CD4-positive, alpha-beta T cell (primary cell): ENCODE measurements at regions of chr4 and their contacts with region 1.

Region 1: DNA sequence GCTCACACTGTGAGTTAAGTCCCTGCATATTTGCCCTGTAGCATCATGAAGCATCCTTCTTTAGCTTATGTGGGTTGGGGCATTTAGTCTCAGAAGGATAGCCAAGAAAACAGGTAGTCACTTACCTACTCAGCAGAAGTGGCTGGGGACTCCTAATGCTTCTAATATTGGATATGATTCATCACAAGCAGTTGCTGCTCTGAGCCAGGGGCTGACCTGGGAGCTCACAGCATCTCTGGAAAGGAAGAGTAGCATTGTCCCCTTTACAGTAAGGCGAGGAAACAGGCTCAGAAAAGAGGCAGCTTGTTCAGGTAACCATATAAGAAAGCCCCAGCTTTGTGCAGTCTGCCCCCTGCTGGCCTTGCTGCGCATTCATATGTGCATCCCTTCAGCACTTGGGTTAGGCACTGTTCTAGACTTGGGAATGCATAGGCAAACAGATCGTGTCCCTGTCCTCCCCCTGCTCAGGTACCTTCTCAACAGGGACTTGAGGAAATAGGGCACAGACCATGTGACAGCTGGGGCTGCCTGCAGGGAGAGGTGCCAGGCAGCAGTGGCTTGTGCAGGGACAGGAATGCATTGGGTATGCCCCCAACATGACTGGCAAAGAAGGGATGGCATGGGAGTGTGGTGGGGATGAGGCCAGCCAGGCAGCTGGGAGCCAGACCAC is 35.7 kb upstream of the TBC1D14 start:
- DNase-seq: peak; percentile 74 to 89 (median 78)
- ATAC-seq: peak; percentile 97
- H3K4me3 ChIP-seq: no peak overlapping the region
- H3K4me3 Mint-ChIP-seq: no peak overlapping the region
- H3K27ac ChIP-seq: no peak overlapping the region
- H3K27ac Mint-ChIP-seq: no peak overlapping the region
- H3K4me1 ChIP-seq: peaks cover 6% of the 10 kb centered on the region
- H3K4me1 Mint-ChIP-seq: no peaks in the 10 kb centered on the region
- H3K27me3 ChIP-seq: no peaks in the 10 kb centered on the region
- H3K27me3 Mint-ChIP-seq: no peaks in the 10 kb centered on the region
- CTCF ChIP-seq: peak; percentile 80

Region 2: DNA sequence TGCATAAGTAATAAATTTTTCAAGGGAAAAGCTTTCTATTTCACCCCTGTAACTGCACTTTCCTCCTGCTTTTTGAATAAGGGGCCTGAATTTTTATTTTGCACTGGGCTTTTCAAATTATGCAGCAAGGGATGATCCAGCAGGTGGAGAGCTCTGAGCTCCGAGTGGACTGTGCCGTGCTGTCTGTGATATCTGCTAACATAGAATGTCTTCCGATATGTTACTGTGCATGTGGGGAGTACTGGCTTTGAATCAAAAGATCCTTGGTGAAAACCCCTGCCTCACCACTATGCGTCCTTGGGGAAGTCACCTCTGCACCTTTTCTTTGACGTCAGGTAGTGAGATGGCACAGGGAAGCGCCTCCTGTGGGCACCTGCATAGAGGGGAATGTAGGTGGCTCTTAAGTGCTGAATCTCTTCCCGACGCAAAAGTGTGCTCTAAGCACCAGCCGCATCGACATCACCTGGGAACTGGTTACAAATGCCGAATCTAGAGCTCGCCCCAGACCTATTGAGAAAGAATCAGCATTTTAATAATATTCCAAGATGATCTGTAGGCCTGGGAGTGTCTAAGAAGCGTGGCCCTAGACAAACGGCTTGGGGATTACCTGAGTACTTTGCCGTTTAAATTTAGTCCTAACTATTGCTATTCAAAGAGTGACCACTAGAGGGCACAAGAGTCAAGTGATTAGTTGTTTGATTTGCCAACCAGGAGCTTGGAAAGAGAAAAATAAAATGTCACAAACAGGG is 623.5 kb before region 1 on chr4:
- CTCF ChIA-PET with region 1: no interaction called
- POLR2A ChIA-PET with region 1: no interaction called
- intact Hi-C with region 1: loop called (anchors 5 kb)
- DNase-seq: peak in 5 of 14 experiments; percentile 14 to 83 (median 73)
- ATAC-seq: peak; percentile 49
- H3K4me3 ChIP-seq: no peak overlapping the region
- H3K4me3 Mint-ChIP-seq: no peak overlapping the region
- H3K27ac ChIP-seq: no peak overlapping the region
- H3K27ac Mint-ChIP-seq: no peak overlapping the region
- H3K4me1 ChIP-seq: peaks cover 4% of the 10 kb centered on the region
- H3K4me1 Mint-ChIP-seq: no peaks in the 10 kb centered on the region
- H3K27me3 ChIP-seq: peaks cover 25 to 37% of the 10 kb centered on the region in 2 experiments
- H3K27me3 Mint-ChIP-seq: peaks cover 52% of the 10 kb centered on the region
- CTCF ChIP-seq: peak; percentile 90

Region 3: GRCh38 chr4:6327041-6327917 is 546.6 kb before region 1 on chr4:
- CTCF ChIA-PET with region 1: no interaction called
- POLR2A ChIA-PET with region 1: no interaction called
- intact Hi-C with region 1: loop called in 1 of 2 experiments (anchors 5 kb)
- DNase-seq: peak; percentile 45 to 86 (median 74)
- ATAC-seq: peak; percentile 77
- H3K4me3 ChIP-seq: no peak overlapping the region
- H3K4me3 Mint-ChIP-seq: no peak overlapping the region
- H3K27ac ChIP-seq: no peak overlapping the region
- H3K27ac Mint-ChIP-seq: no peak overlapping the region
- H3K4me1 ChIP-seq: peaks cover 7% of the 10 kb centered on the region
- H3K4me1 Mint-ChIP-seq: no peaks in the 10 kb centered on the region
- H3K27me3 ChIP-seq: peaks cover 12 to 24% of the 10 kb centered on the region in 2 experiments
- H3K27me3 Mint-ChIP-seq: peaks cover 60% of the 10 kb centered on the region
- CTCF ChIP-seq: peak; percentile 89

Region 4: GRCh38 chr4:6716018-6716911 is 157.7 kb before region 1 on chr4 and contains the start of gene BLOC1S4:
- CTCF ChIA-PET with region 1: interaction called, 101 read pairs
- POLR2A ChIA-PET with region 1: interaction called, 25 read pairs
- intact Hi-C with region 1: loop called (anchors 1 kb)
- DNase-seq: peak; percentile 79 to 98 (median 88)
- ATAC-seq: peak; percentile 79
- H3K4me3 ChIP-seq: peak within 1 kb of the TSS; percentile 95
- H3K4me3 Mint-ChIP-seq: peak within 1 kb of the TSS; percentile 99
- H3K27ac ChIP-seq: peak within 1 kb of the TSS; percentile 82 to 85
- H3K27ac Mint-ChIP-seq: peak within 1 kb of the TSS; percentile 99
- H3K4me1 ChIP-seq: peaks cover 31% of the 10 kb centered on the region
- H3K4me1 Mint-ChIP-seq: peaks cover 39% of the 10 kb centered on the region
- H3K27me3 ChIP-seq: no peaks in the 10 kb centered on the region
- H3K27me3 Mint-ChIP-seq: no peaks in the 10 kb centered on the region
- CTCF ChIP-seq: no peak
- total RNA-seq, gene BLOC1S4: 24.6 to 27.6 TPM

Region 5: DNA sequence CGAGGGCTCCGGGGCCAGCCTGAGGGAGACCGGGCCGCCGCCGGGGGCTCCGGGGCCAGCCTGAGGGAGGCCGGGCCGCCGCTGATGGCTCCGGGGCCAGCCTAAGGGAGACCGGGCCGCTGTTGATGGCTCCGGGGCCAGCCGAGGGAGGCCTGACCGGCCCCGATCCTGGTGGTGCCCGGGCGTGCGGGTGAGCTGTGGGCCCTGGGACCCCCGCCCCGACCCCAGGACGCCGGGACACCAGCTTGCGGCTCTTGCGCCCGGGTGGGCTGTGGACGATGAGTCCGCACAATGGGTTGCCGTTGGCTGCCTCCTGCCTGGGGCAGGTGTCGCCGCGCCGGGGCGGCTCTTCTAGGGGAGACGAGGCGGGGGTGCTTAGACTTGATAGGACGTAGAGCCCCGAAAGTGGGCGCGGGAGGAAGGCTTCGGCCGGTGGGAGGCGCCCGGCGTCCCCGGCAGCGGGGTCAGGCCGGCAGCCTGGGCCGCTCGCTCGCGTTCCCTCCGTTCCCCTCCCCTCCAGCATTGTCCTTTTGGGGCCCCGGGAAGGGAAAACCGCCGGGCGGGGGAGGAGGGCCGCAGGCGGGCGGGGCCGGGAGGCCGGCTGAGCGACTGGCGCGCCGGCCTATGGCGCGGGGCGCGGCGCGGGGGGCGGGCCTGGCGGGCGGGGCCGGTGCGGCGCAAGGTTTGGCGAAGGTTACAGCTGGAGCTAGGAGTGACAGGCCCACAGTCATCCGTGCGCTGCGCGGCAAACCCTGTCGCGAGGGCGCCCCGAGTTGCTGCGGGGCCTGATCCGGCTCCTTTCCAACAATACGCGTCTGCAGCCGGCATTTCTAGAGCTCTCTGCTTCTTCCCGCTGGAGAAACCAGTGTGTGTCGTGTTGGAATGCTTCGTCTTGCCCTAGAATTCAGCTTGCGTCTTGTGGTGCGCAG is 90.6 kb before region 1 on chr4:
- CTCF ChIA-PET with region 1: interaction called, 8 read pairs
- POLR2A ChIA-PET with region 1: no interaction called
- intact Hi-C with region 1: loop called in 1 of 2 experiments (anchors 5 kb)
- DNase-seq: peak; percentile 78 to 94 (median 86)
- ATAC-seq: peak; percentile 78
- H3K4me3 ChIP-seq: peak overlapping the region; percentile 77
- H3K4me3 Mint-ChIP-seq: peak overlapping the region; percentile 92
- H3K27ac ChIP-seq: peak overlapping the region; percentile 92 to 96
- H3K27ac Mint-ChIP-seq: peak overlapping the region; percentile 86
- H3K4me1 ChIP-seq: peaks cover 43% of the 10 kb centered on the region
- H3K4me1 Mint-ChIP-seq: peaks cover 59% of the 10 kb centered on the region
- H3K27me3 ChIP-seq: no peaks in the 10 kb centered on the region
- H3K27me3 Mint-ChIP-seq: no peaks in the 10 kb centered on the region
- CTCF ChIP-seq: no peak

Region 6: DNA sequence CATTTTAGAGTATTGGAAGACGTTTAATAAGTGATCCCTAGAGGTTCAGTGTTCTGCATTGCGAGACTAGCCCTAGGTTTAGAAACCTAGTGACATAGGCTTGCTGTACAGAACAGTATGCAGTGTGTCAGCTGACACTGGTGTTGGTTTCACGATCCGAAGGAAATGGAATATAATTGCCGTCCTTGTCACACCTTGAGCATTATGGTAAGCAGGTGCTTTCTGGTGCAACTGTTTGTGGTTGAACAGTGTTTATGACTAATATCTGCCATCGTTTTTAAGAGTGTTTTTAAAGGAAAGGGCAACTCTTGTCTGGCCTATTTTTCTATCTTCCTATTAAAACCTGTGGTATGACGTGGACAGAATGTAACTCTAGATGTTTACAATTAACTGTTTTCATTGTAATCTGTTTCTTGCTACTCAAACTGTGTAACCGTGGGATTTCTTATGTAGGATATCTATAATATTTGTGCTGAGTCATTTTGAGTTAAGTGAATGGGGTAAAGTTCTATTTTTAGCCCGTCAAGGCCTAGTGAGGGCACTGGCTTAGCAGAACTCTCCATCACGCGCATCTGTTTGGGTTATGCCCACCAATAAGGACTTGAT is 18.1 kb before region 1 on chr4:
- CTCF ChIA-PET with region 1: interaction called, 11 read pairs
- POLR2A ChIA-PET with region 1: no interaction called
- intact Hi-C with region 1: no loop called
- DNase-seq: peak in 4 of 14 experiments; percentile 31 to 73 (median 66)
- ATAC-seq: peak; percentile 84
- H3K4me3 ChIP-seq: no peak overlapping the region
- H3K4me3 Mint-ChIP-seq: no peak overlapping the region
- H3K27ac ChIP-seq: peak overlapping the region in 1 of 2 donors; percentile 42
- H3K27ac Mint-ChIP-seq: peak overlapping the region; percentile 64
- H3K4me1 ChIP-seq: peaks cover 10% of the 10 kb centered on the region
- H3K4me1 Mint-ChIP-seq: peaks cover 18% of the 10 kb centered on the region
- H3K27me3 ChIP-seq: no peaks in the 10 kb centered on the region
- H3K27me3 Mint-ChIP-seq: no peaks in the 10 kb centered on the region
- CTCF ChIP-seq: no peak

Region 7: DNA sequence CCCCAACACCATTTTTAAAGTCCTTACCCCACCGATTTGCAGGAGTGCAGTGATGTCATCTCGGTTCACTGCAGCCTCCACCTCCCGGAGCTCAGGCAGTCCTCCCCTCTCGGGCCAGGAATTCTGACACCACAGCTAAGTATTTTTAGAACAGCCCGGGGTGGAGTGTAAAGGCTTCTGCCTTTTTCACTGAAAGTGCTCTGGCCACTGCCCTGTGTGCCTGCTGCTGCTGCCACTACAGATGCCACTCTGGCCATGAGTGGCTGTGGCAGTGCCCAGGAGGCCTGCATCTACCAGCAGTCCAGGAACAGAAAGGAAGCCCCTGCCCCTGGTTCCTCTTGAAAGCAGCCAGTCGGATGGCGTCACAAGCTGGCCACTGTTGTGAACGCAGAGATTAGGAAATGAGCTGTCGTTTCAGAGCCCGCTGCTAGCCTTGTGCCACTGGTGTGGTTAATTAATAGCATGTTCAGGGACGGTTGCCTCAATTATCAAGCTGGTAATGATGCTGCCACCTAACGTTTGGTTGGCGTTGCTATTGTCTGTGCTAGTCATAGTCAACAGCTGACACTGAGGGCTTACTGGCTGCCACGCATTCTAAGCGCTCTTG is 12.1 kb after region 1 on chr4:
- CTCF ChIA-PET with region 1: interaction called, 13 read pairs
- POLR2A ChIA-PET with region 1: no interaction called
- intact Hi-C with region 1: no loop called
- DNase-seq: peak in 4 of 14 experiments; percentile 21 to 64 (median 56)
- ATAC-seq: peak; percentile 34
- H3K4me3 ChIP-seq: no peak overlapping the region
- H3K4me3 Mint-ChIP-seq: no peak overlapping the region
- H3K27ac ChIP-seq: no peak overlapping the region
- H3K27ac Mint-ChIP-seq: no peak overlapping the region
- H3K4me1 ChIP-seq: peaks cover 9% of the 10 kb centered on the region
- H3K4me1 Mint-ChIP-seq: peaks cover 5% of the 10 kb centered on the region
- H3K27me3 ChIP-seq: no peaks in the 10 kb centered on the region
- H3K27me3 Mint-ChIP-seq: no peaks in the 10 kb centered on the region
- CTCF ChIP-seq: no peak

Region 8: DNA sequence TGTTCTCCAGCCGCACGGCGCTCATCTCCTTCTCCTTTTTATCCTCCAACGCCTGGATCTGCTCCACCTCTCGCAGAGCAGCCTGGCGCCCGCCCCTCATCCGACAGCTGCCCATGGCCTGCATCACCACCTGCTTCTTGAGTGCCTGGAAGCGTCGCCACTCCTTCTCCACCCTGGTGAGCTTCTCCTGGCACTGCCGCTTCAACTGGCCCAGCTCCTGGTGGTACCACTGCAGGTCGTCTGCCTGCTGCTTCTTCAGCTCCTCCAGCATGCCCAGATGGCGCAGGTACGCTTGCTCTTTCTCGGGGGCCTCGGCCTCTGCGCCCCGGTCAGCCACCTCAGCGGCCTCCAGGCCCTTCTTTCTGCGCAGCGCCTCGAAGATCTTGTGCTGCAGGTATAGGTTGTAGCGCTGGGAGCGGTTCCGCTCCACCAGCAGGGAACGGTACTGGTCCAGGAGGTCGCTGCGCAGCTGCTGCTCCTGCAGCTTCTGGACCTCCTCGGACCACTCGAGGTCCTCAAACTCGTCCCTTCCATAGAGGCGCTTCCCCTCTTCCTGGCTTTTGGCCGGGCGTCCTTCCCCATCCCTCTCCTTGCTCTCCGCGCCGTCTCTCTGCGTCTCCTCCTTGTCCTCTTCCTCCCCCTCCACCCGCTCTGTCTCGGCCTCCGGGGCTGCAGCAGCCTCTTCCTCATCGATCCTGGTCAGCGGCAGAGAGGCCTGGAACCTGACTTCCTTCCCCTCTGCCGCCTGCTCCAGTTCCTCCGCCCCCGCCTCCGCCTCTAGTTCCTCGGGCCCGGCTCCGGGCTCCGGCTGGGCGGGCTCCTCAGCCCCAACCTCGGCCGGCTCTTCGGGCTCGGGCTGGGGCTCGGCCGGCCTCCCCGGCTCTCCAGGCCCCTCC is 168.1 kb after region 1 on chr4:
- CTCF ChIA-PET with region 1: no interaction called
- POLR2A ChIA-PET with region 1: no interaction called
- intact Hi-C with region 1: no loop called
- DNase-seq: peak in 5 of 14 experiments; percentile 13 to 47 (median 20)
- ATAC-seq: no peak
- H3K4me3 ChIP-seq: peak overlapping the region; percentile 87
- H3K4me3 Mint-ChIP-seq: peak overlapping the region; percentile 86
- H3K27ac ChIP-seq: no peak overlapping the region
- H3K27ac Mint-ChIP-seq: peak overlapping the region; percentile 82
- H3K4me1 ChIP-seq: peaks cover 47% of the 10 kb centered on the region
- H3K4me1 Mint-ChIP-seq: peaks cover 57% of the 10 kb centered on the region
- H3K27me3 ChIP-seq: no peaks in the 10 kb centered on the region
- H3K27me3 Mint-ChIP-seq: no peaks in the 10 kb centered on the region
- CTCF ChIP-seq: no peak

Region 9: DNA sequence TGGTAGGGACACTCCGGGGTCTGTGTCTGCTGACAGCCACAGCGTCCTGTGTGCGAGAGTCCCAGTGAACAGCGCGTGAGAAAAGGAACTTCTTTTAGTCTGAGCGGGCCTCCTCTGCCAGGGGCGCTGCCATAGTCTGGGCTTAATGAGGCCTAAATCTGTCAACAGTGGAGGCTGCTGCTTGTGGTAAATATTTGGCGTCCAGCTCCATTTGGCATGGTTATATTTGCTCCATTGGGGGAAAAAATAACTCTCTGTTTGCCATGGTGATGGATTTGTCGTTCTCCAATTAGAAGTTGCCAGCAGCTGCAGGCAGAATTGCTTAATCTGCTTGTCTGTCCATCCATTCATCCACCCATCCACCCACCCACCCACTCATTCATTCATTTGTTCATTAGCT is 632.2 kb after region 1 on chr4:
- CTCF ChIA-PET with region 1: no interaction called
- POLR2A ChIA-PET with region 1: no interaction called
- intact Hi-C with region 1: no loop called
- DNase-seq: no peak
- ATAC-seq: no peak
- H3K4me3 ChIP-seq: no peak overlapping the region
- H3K4me3 Mint-ChIP-seq: no peak overlapping the region
- H3K27ac ChIP-seq: no peak overlapping the region
- H3K27ac Mint-ChIP-seq: no peak overlapping the region
- H3K4me1 ChIP-seq: no peaks in the 10 kb centered on the region
- H3K4me1 Mint-ChIP-seq: no peaks in the 10 kb centered on the region
- H3K27me3 ChIP-seq: peaks cover 0 to 7% of the 10 kb centered on the region in 2 experiments
- H3K27me3 Mint-ChIP-seq: peaks cover 32% of the 10 kb centered on the region
- CTCF ChIP-seq: no peak